Tibial artery (tissue), 4 donors: ENCODE measurements at regions of chr11 and their contacts with region 1.

Region 1: DNA sequence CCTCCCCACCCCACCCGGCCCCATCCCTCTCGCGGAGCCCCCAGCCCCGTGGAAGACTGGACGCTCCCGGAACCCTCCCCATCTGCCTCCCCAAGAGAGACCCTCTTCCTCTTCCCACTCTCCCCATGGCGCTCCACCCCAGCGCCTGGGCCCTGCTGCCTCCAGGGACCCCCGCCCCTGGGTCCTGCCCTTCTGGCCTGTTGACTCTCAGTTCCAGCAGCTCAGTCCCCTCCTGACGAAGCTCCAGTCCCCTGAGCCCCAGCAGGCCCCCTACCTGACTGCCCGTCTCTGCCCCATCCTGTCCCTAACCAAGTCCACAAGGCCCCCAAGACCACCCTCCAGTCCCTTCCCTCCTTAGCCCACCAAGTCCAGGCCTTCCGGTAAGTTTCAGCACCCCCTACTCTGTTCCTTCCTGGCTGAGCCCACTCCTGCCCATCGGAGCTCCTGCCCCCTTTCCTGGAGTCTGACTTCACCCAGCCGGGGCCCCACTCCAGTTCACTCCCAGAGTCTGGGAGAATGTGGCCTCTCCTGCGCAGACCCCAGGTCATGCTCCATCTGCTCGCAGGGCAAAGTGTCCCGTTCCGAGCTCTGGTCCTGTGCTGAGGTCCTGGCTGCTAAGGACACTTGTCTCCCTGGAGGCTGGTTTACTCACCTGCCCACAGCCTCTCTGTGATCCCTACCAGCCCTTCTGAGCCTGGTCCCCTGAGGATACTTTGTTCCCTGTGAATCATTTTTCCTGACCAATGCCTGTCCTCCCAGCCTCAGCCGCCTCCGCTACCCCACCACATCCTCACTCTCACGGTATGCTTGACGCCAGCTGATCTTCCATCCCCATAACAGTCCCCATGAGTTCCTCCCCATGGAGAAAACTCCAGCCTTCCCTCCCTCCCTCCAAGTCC is 732 bp downstream of the IFITM10 start:
- DNase-seq: peak; percentile 63 to 91
- H3K4me3 ChIP-seq: peak overlapping the region; percentile 62 to 85
- H3K27ac ChIP-seq: peak overlapping the region; percentile 88 to 91
- H3K4me1 ChIP-seq: peaks cover 0 to 72% (median 59%) of the 10 kb centered on the region in 4 donors
- H3K27me3 ChIP-seq: no peaks in the 10 kb centered on the region
- CTCF ChIP-seq: no peak

Region 2: DNA sequence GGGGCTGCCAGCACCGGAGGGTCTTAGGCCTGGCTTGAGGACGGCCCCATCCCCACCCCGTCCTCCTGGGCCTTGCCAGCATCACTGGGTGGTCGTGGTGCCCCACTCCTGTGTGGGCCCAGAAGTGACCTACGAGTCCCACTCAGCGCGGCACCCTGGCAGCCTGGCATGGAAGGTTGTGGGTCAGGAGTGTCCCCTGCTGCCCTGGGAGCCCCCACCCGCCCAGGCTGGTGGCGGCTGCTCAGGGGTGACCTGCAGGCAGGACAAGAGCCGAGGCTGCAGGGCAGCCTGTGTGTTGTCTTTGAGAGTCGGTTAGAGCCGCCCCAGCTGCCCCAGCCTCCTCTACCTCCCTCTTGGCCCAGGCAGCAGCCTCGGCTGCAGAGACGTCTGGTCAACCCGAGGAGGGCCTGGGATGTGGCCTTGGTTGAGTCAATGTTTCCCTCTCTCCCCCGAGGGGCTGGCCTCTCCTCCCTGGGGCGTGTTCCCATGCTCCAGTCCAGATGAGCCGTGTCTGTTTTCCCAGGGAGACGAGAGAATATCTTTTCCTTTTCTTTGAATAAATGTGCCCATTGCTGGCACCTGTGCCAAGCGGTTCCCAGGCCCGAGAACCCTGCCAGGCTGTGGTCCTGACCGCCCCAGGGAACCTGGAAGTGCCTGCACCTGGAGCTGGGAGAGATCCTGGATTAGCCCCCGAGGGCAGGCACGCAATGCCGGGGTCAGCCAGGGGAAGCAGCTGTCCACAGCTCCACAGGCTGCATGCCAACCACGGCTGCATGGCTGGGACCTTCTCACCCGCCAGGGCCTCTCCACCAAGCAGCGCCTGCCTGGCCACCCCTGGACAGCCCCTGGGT is 627.6 kb before region 1 on chr11:
- intact Hi-C with region 1: no loop called
- DNase-seq: peak; percentile 3 to 43
- H3K4me3 ChIP-seq: no peak overlapping the region
- H3K27ac ChIP-seq: no peak overlapping the region
- H3K4me1 ChIP-seq: no peaks in the 10 kb centered on the region
- H3K27me3 ChIP-seq: peaks cover 0 to 61% of the 10 kb centered on the region in 2 donors
- CTCF ChIP-seq: no peak

Region 3: DNA sequence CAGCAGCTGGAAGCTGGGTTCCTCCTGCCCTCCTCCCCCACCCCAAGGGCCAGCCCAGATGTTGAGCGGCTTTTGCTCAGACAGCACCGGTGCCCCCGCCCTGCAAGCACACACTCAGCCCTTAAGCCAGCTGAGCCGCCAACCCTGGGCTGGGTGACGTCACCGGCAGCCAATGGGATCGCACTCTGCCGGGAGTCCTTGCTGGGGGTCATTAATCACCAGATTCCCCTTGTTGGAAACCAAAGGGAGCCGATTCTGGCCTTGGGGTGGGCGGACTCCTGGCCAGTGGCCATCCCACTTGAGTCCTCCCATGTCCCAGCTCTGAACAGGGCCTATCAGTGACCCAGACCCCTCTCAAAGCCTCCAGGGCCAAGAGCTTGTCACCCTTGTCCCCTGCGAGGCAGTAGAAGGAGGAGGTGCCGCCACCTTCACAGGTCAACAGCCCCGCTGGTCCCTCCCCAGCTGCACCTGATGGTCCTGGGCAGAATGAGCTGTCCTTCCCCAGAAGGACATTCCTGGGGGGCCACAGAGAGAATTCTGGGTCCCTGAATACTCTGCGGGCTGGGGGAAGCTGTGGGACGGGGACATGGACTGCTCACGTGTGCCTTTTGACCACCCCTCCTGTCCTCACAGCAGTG is 185.0 kb before region 1 on chr11:
- intact Hi-C with region 1: loop called (anchors 10 kb)
- DNase-seq: peak; percentile 31 to 85
- H3K4me3 ChIP-seq: no peak overlapping the region
- H3K27ac ChIP-seq: peak overlapping the region; percentile 17 to 59
- H3K4me1 ChIP-seq: peaks cover 5 to 58% (median 44%) of the 10 kb centered on the region in 4 donors
- H3K27me3 ChIP-seq: no peaks in the 10 kb centered on the region
- CTCF ChIP-seq: no peak

Region 4: DNA sequence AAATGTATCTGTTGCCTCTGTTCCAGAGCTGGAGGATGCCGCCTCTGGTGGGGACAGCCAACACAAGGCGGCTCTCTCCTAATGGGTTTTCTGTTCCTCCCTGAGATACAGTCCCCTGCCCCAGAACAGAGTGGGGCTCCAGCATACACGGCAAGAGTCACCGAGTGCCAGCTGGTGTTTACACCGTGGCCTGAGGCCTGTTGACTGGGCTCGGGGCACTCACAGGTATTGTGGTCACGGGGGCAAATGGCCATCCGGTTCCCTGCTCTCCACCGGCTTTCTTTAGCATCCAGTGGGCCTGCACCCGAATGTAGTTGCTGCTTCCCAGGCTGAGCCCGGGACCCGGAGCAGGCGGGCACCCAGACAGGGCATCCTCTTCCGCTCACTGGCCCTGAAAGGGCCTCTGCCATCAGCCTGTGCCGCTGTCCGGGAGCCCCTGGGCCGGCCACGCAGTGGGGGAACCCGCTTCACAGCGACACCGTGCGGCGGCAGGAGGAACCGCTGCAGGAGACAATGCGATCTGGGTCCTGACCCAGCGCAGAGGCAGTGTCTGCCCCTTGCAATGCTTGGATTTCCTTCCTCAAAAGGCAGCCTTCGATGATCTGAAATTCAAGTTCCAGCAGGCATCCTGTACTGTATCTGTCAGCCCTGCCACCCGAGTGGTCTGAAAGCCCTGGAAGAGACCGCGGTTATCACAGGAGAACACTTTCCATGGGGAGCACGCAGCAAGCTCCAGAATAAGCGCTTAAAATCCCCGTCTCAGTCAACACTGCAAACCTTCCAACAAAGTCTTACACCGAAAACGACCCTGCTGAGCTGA is 120.9 kb before region 1 on chr11:
- intact Hi-C with region 1: no loop called
- DNase-seq: no peak
- H3K4me3 ChIP-seq: no peak overlapping the region
- H3K27ac ChIP-seq: no peak overlapping the region
- H3K4me1 ChIP-seq: no peaks in the 10 kb centered on the region
- H3K27me3 ChIP-seq: peaks cover 0 to 61% of the 10 kb centered on the region in 2 donors
- CTCF ChIP-seq: peak; percentile 63 to 86

Region 5: DNA sequence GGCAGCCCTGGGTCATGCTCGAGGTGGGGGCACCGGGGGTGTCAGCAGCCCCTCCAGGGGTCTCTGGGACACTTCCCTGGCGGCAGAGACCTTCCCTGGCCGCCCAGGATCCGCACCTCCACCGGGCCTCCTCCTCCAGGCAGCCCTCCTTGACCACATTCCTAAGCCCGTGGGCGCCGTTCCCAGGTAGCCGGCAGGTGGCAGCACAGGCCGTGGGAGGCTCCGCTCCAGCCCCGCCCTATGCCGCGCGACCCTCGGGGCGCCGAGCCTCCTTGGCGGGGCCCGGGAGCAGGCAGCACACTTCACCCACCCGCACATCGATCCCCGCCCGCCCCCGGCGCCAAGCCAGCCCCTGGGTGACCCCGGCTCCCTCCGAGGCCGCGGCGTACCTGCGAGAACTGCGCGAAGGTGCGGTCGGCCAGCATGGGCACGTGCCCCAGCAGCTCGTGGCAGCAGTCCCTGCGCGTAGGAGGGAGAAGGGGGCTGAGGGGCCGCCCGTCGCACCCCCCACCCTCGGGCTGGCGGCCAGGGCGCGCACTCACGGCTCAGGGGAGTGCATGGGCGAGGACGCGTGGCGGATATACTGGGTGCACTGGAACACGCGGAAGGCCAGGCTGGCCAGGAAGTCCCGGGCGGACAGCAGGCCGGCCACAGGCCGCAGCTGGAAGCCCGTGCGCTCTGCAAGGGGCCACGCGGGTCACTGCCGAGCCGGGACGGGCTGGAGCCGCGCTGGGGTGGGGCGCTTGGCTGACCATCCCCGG is 416.6 kb after region 1 on chr11:
- intact Hi-C with region 1: no loop called
- DNase-seq: no peak
- H3K4me3 ChIP-seq: no peak overlapping the region
- H3K27ac ChIP-seq: no peak overlapping the region
- H3K4me1 ChIP-seq: peaks cover 0 to 10% (median 6%) of the 10 kb centered on the region in 4 donors
- H3K27me3 ChIP-seq: peaks cover 0 to 92% of the 10 kb centered on the region in 2 donors
- CTCF ChIP-seq: peak in 1 of 2 experiments; percentile 36

Region 6: DNA sequence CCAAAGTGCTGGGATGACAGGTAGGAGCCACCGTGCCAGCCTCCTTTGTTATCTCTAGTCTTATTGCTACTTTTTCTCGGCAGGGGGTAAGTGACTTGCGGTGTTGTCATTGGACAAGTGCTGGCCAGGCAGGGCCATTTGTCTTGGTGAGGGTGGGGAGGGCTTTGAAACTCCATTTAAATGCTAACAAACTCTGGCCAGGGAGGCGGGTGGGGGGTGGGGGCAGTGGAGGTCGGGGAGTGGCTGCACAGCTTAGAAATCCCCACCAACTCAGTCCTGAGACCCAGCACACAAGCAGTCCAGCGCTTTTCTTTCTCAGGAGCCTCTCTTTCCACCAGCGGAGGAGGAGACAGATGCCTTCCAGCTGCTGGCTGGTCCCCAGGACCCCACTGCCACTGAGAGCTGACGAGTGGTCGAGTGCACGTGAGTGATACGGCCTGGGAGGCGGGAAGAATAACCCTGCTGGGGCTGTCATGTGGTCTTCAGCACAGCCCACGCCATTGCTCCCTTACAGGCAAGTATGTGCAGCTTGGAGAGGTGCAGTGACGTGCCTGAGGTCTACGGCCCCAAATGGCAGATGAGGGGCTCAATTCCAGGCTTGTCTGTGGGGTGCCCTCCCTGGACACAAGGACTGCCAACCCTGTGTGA is 1439.7 kb after region 1 on chr11:
- intact Hi-C with region 1: no loop called
- DNase-seq: peak in 1 of 2 donors; percentile 39
- H3K4me3 ChIP-seq: no peak overlapping the region
- H3K27ac ChIP-seq: no peak overlapping the region
- H3K4me1 ChIP-seq: no peaks in the 10 kb centered on the region
- H3K27me3 ChIP-seq: peaks cover 0 to 37% of the 10 kb centered on the region in 2 donors
- CTCF ChIP-seq: no peak